ENCODE measurements at regions of chr17 and their contacts with region 1.

Region 1: DNA sequence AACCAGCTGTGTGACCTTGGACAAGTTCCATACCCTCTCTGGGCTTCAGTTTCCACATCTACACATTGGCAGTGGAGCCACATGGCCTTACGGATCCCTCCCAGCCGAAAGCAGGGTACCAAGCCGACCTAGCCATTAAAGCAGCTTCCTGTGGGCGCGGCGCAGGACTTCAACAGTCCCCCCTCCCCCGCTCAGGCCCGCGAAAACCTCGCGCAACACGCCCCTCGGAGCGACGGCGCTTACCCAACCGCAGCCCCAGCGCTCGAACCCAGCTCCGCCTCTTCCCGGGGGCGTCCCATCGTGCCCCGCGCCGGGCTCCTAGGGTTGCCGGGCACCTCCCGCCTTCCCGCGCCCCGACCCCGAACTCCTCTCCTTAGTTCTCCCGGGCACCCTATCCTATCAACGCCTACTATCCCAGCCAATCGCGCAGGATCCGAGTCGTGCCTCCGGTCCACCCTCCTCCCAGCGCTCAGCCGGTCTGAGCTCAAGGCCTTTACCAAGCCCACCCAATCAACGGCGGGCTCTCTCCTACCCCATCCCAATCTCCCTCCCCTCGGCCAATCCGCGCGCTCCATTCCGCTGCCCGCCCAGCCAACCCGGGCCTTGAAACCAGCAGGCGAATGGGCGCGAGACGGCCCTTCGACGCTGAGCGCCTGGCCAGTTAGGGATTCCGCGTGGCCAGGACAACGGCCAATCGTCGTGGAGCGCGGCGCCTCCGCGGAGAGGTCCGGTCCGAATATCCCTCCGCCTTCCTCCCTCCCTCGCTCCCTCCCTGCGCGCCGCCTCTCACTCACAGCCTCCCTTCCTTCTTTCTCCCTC is at the start of gene KPNB1:
- H3K4me3 ChIP-seq: peak within 1 kb of the TSS; percentile 76
- H3K27ac ChIP-seq: peak within 1 kb of the TSS; percentile 95
- H3K4me1 ChIP-seq: peaks cover 12% of the 10 kb centered on the region
- CTCF ChIP-seq: no peak

Region 2: GRCh38 chr17:47615766-47616424 is 33.5 kb before region 1 on chr17:
- CTCF ChIA-PET with region 1: interaction called, 8 read pairs
- POLR2A ChIA-PET with region 1: interaction called, 20 read pairs
- H3K4me3 ChIP-seq: no peak overlapping the region
- H3K27ac ChIP-seq: no peak overlapping the region
- H3K4me1 ChIP-seq: peaks cover 11% of the 10 kb centered on the region
- CTCF ChIP-seq: peak; percentile 41; the same call in 1 of the 2 replicates

Region 3: DNA sequence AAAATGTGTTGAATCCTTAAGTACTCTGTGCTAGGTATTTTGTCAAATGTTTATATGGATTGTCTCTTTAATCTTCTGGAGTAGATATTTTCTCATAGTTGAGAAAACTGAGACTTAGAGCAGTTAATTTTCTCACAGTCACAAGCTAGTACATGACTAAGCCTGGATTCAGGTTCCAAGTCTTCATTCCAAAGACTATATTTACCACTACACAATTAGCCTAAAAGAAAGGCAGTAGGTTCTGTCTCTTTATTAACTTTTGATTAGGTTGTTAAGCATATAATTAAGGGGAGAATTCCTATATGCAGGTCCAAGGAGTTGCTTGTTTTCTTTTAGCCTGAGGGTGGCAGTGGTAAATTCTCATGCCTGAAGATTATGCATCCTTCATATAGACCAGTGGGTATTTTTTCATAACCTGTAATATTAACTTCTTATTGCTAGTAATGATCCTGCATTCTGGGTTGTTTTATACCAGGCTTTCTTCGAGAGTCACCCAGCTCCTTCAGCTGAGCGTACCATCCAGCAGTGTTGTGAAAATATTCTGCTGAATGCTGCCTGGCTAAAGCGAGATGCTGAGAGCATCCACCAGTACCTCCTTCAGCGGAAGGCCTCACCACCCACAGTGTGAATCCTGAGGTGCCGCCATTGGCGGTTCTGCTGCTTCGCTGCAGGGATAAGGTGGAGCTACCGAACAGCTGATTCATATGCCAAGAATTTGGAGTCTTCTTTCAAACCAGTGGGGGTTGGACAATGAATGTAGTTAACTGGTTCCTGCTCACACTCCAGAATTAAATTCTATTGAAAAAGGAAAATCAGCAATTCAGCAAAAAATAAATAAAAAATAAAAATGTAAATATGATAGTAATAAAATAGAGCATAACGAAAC is 27.8 kb before region 1 on chr17:
- CTCF ChIA-PET with region 1: interaction called, 8 read pairs
- POLR2A ChIA-PET with region 1: interaction called, 20 read pairs
- H3K4me3 ChIP-seq: no peak overlapping the region
- H3K27ac ChIP-seq: peak overlapping the region; percentile 57
- H3K4me1 ChIP-seq: peaks cover 13% of the 10 kb centered on the region
- CTCF ChIP-seq: no peak

Region 4: GRCh38 chr17:47633996-47634395 is 15.4 kb before region 1 on chr17:
- CTCF ChIA-PET with region 1: interaction called, 6 read pairs
- POLR2A ChIA-PET with region 1: interaction called, 28 read pairs
- H3K4me3 ChIP-seq: no peak overlapping the region
- H3K27ac ChIP-seq: no peak overlapping the region
- H3K4me1 ChIP-seq: no peaks in the 10 kb centered on the region
- CTCF ChIP-seq: no peak

Region 5: DNA sequence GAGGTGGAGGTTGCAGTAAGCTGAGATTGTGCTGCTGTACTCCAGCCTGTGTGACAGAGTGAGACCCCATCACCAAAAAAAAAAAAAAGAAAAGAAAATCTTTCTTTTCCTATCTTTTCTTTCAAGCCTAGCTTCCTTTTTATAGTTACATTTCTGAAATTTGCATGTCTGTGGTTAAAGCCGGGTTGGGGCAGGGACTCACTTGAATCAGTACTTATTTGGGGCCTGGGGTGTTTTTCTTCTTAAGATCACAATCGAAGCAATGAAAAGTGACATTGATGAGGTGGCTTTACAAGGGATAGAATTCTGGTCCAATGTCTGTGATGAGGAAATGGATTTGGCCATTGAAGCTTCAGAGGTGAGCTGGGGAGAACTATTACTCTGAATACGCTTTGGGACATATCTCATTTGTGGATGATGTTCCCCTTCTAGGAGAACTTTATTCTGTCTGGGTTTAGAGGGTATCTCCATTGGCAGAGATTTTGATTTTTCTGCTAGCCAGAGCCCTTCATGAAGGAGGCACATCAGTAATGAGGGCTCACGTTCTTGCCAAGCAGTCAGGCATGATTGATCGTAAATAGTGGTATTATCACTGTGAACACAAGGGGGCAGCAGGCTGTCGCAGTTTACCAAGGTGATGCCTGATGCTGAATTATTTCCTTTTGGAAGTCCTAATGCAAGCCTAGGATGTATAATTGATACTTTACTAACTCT is 14.7 kb after region 1 on chr17:
- CTCF ChIA-PET with region 1: interaction called, 17 read pairs
- POLR2A ChIA-PET with region 1: interaction called, 48 read pairs
- H3K4me3 ChIP-seq: no peak overlapping the region
- H3K27ac ChIP-seq: no peak overlapping the region
- H3K4me1 ChIP-seq: no peaks in the 10 kb centered on the region
- CTCF ChIP-seq: peak; percentile 60

Region 6: GRCh38 chr17:47675380-47676198 is 26.2 kb after region 1 on chr17:
- CTCF ChIA-PET with region 1: interaction called, 4 read pairs
- POLR2A ChIA-PET with region 1: interaction called, 21 read pairs
- H3K4me3 ChIP-seq: no peak overlapping the region
- H3K27ac ChIP-seq: no peak overlapping the region
- H3K4me1 ChIP-seq: no peaks in the 10 kb centered on the region
- CTCF ChIP-seq: no peak

Region 7: GRCh38 chr17:47692895-47693733 is 43.8 kb after region 1 on chr17:
- CTCF ChIA-PET with region 1: interaction called, 8 read pairs
- POLR2A ChIA-PET with region 1: interaction called, 18 read pairs
- H3K4me3 ChIP-seq: peak overlapping the region; percentile 65
- H3K27ac ChIP-seq: peak overlapping the region; percentile 74
- H3K4me1 ChIP-seq: peaks cover 12% of the 10 kb centered on the region
- CTCF ChIP-seq: no peak; the same call in 1 of the 2 replicates

Region 8: DNA sequence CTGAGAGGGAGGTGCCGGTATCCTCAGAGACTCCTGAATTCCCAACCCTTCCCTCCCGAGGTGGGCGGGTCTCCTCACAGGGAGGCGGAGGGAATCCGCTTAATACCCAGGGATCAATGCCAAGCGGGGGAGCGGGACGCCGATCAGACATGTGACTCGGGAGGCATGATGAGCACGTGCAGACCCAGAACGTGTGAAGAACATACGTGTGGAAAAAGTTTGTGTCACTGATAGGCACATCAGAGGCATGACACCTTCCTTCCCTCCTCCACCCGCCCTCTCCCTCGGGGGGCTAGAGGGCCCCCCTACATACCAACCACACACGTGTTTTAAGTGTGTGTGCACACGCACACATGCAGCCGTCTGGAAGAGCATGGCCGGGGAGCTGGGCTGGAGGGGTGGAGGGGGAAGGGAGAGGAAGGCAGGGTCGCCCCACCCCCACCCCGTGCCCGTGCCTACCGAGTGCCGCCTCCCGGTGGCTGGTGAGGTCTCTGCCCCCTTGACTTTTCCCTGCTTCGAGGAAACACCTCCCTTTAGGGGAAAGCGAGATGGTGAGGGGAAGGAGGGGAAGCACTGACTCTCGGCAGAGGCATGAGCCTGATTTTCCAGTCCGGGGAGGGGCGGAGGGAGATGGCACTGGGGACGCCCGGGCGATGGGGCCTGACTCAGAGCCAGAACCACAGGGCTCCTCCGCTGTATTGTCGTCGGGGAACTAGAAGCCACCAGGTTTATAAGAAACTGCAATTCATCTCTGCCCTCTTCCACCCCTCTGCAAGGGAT is 71.6 kb after region 1 on chr17:
- CTCF ChIA-PET with region 1: no interaction called
- POLR2A ChIA-PET with region 1: no interaction called
- H3K4me3 ChIP-seq: no peak overlapping the region
- H3K27ac ChIP-seq: no peak overlapping the region
- H3K4me1 ChIP-seq: peaks cover 2% of the 10 kb centered on the region
- CTCF ChIP-seq: no peak

Region 9: GRCh38 chr17:48024937-48025906 is 375.9 kb after region 1 on chr17:
- CTCF ChIA-PET with region 1: no interaction called
- POLR2A ChIA-PET with region 1: no interaction called
- H3K4me3 ChIP-seq: peak overlapping the region; percentile 45
- H3K27ac ChIP-seq: no peak overlapping the region
- H3K4me1 ChIP-seq: peaks cover 14% of the 10 kb centered on the region
- CTCF ChIP-seq: peak; percentile 86